Psoas muscle (tissue), 8 donors: ENCODE measurements at regions of chr10 and their contacts with region 1.

Region 1: DNA sequence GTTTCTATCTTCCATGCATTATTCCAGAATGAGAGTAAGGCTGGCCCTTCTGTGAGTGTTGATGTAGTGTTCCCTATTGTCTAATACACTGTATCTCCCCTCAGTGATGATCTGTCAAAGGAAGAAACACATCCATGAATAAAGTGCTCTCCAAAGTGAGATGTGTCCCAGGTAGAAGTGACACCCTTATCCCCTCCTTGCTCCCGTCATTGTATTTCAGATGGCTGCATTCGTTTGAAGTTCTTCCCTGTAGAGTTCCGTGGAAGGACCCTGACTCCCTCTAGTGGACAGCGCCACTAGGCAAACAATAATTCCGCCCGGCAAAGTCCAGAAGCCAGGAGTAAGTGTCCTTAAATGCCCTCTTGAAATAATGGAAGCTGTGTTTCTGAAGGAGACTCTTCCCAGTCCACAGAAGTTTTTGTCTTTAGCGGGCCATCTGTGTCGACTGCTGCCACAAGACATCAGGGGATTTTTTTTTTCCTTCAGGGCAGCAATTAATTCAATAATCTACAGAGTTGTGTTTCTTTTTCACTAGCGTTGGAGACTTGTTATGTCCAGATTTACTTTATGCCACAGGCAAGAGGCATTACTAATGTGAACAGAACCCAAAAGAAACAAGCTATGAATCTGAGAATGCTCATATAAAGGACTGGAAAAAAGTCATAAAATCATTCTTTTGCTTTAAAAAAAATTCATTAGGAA is 64.6 kb downstream of the THNSL1 start:
- DNase-seq: peak; percentile 66 to 82
- ATAC-seq: peak; percentile 90 to 99 (median 96)
- H3K4me3 ChIP-seq: no peak overlapping the region
- H3K27ac ChIP-seq: no peak overlapping the region
- H3K4me1 ChIP-seq: no peaks in the 10 kb centered on the region
- H3K27me3 ChIP-seq: no peaks in the 10 kb centered on the region
- CTCF ChIP-seq: peak; percentile 87

Region 2: GRCh38 chr10:24617771-24618391 is 463.1 kb before region 1 on chr10:
- intact Hi-C with region 1: loop called (anchors 2 to 5 kb)
- DNase-seq: peak; percentile 66 to 74
- ATAC-seq: peak; percentile 69 to 87 (median 80)
- H3K4me3 ChIP-seq: no peak overlapping the region
- H3K27ac ChIP-seq: peak overlapping the region; percentile 4
- H3K4me1 ChIP-seq: peaks cover 1% of the 10 kb centered on the region
- H3K27me3 ChIP-seq: no peaks in the 10 kb centered on the region
- CTCF ChIP-seq: peak; percentile 87

Region 3: DNA sequence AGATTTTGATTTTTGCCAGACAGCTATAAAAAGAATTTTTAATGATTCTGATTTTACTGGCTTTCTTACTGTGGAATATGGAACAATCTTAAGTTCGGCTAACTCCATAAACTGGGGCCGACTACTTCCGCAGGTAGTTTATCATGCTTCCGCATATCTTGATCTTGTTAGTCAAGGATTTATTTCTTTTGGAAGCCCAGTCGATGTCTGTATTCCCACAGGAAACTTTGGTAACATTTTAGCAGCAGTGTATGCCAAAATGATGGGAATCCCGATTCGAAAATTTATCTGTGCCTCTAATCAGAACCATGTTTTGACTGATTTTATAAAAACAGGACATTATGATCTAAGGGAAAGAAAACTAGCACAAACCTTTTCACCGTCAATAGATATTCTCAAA is 56.5 kb before region 1 on chr10:
- intact Hi-C with region 1: loop called in 1 of 2 experiments (anchors 1 kb)
- DNase-seq: no peak
- ATAC-seq: no peak
- H3K4me3 ChIP-seq: no peak overlapping the region
- H3K27ac ChIP-seq: no peak overlapping the region
- H3K4me1 ChIP-seq: no peaks in the 10 kb centered on the region
- H3K27me3 ChIP-seq: no peaks in the 10 kb centered on the region
- CTCF ChIP-seq: no peak

Region 4: GRCh38 chr10:25059764-25060389 is 21.2 kb before region 1 on chr10:
- intact Hi-C with region 1: no loop called
- DNase-seq: peak in 1 of 2 donors; percentile 37
- ATAC-seq: peak; percentile 26 to 63 (median 45)
- H3K4me3 ChIP-seq: no peak overlapping the region
- H3K27ac ChIP-seq: no peak overlapping the region
- H3K4me1 ChIP-seq: no peaks in the 10 kb centered on the region
- H3K27me3 ChIP-seq: no peaks in the 10 kb centered on the region
- CTCF ChIP-seq: no peak